ENCODE measurements at regions of chr12 and their contacts with region 1.

Region 1: DNA sequence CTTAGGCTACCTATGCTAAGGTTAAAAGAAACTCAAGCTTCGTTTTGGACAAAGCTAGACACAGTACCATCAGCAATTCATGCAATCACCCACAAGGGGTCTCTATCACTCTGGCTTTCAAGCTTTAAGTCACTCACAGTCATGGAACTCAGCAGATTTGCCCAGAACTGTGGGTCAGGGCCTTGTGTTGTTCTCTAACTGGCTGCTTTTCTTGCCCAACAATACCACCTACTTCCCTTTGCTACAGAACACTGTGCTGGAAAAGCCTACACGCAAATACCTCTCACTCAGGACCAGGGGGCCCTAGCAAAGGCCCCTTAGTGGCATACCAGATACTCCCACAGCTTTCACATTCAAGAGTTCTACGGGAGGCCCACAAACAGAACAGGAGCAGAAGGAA is 9.1 kb downstream of the NEMP1 start:
- DNase-seq: peak; percentile 73
- H3K4me3 ChIP-seq: no peak overlapping the region
- H3K27ac ChIP-seq: no peak overlapping the region
- H3K4me1 ChIP-seq: no peaks in the 10 kb centered on the region
- H3K27me3 ChIP-seq: no peaks in the 10 kb centered on the region
- CTCF ChIP-seq: peak; percentile 84

Region 2: GRCh38 chr12:57111031-57111734 is 41.7 kb after region 1 on chr12 and contains the start of gene STAT6:
- intact Hi-C with region 1: loop called (anchors 2 kb)
- DNase-seq: peak; percentile 91
- H3K4me3 ChIP-seq: peak within 1 kb of the TSS; percentile 65
- H3K27ac ChIP-seq: peak within 1 kb of the TSS; percentile 99
- H3K4me1 ChIP-seq: peaks cover 12% of the 10 kb centered on the region
- H3K27me3 ChIP-seq: no peaks in the 10 kb centered on the region
- CTCF ChIP-seq: no peak
- total RNA-seq, gene STAT6: 161 to 181 TPM

Measured in colonic mucosa (tissue), 4 donors.